Heart right ventricle (tissue), 16 donors: ENCODE measurements at regions of chr12 and their contacts with region 1.

Region 1: DNA sequence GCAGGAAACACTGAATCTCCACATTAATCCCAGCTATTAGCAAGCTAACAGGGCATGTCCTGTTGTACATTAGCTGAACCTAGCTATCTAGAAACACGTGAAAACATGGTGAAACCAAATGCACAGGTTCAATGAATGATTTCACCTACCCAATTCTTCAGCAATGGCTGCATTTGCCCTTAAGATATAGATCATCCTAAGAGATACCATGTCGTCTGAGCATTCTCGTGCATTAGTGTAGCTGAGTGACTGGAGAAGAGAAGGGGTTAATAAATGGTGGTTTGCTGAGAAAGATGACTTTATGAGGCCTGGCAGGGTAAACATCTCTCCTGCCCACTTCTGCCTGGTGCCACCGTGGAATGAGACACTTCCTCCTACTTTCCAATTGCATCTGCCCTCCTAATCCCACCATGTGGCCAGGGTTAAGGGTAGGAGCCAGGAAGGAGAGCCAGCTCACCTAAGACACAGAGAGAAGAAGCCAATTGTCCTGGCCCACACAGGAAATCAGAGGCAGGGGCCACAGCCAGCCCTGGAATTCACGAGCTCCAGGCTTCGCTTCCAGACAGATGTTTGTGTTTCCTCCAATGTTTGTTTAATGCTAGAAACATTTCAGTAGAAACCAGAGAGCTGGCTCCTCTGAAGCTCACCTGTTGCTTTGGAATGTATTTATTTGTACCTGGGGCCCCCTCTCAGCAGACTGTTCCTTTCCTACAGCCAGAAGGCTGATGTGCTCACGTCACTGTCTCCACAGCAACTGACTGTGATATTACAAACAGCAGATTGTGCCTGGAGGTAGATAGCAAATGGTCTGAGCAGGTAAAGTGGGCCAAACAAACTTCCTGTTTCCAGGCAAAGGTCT is 126.0 kb upstream of the PARP11 start:
- DNase-seq: no peak
- ATAC-seq: no peak
- H3K4me3 ChIP-seq: no peak overlapping the region
- H3K27ac ChIP-seq: no peak overlapping the region
- H3K4me1 ChIP-seq: no peaks in the 10 kb centered on the region
- H3K27me3 ChIP-seq: peaks cover 0 to 20% (median 0%) of the 10 kb centered on the region in 7 donors
- CTCF ChIP-seq: no peak

Region 2: GRCh38 chr12:3863756-3864329 is 135.4 kb before region 1 on chr12:
- intact Hi-C with region 1: no loop called
- DNase-seq: no peak
- ATAC-seq: no peak
- H3K4me3 ChIP-seq: no peak overlapping the region
- H3K27ac ChIP-seq: no peak overlapping the region
- H3K4me1 ChIP-seq: no peaks in the 10 kb centered on the region
- H3K27me3 ChIP-seq: no peaks in the 10 kb centered on the region
- CTCF ChIP-seq: no peak

Region 3: GRCh38 chr12:4030929-4031702 is 31.9 kb after region 1 on chr12:
- intact Hi-C with region 1: loop called in 8 of 10 experiments (anchors 2 to 5 kb)
- DNase-seq: peak; percentile 84
- ATAC-seq: peak; percentile 96 to 99 (median 98)
- H3K4me3 ChIP-seq: peak overlapping the region in 9 of 10 donors; percentile 38 to 71 (median 59)
- H3K27ac ChIP-seq: peak overlapping the region in 8 of 10 donors; percentile 22 to 82 (median 78)
- H3K4me1 ChIP-seq: peaks cover 0 to 24% (median 12%) of the 10 kb centered on the region in 9 donors
- H3K27me3 ChIP-seq: peaks cover 0 to 11% (median 0%) of the 10 kb centered on the region in 7 donors
- CTCF ChIP-seq: peak in 3 of 9 donors; percentile 8 to 34 (median 14)

Region 4: DNA sequence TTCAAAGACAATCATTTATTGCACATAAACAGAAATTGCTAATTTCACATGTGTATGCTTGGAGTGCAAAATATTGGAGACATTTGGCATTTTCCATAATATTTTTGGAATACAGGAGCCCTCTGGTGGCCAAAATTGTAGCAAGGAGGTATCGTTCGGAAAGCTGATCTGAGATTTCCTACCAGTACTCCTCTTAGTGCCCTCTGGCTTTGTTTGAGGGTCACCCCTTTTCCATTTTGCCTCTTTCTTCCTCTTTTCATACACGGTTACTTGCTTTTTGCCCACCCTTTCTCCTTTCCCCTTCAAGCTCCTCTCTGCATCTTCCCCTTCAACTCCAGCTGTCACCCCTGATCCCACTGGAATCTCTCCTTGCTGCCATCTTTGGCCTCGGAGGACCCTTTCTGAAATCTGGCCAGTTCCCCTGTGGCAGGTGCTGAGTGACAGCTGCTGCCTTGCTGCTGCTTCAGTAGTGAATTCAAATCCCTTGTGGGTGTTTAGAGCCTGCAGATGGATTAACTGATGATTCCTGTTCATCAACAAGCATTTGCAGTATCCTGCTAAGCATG is 38.6 kb after region 1 on chr12:
- intact Hi-C with region 1: loop called in 8 of 10 experiments (anchors 2 to 5 kb)
- DNase-seq: peak in 1 of 2 donors; percentile 56
- ATAC-seq: peak in 1 of 8 donors; percentile 52
- H3K4me3 ChIP-seq: no peak overlapping the region
- H3K27ac ChIP-seq: no peak overlapping the region
- H3K4me1 ChIP-seq: peaks cover 0 to 4% (median 0%) of the 10 kb centered on the region in 9 donors
- H3K27me3 ChIP-seq: peaks cover 0 to 6% (median 0%) of the 10 kb centered on the region in 7 donors
- CTCF ChIP-seq: peak; percentile 44 to 83 (median 71)

Region 5: GRCh38 chr12:4089121-4089606 is 90.0 kb after region 1 on chr12:
- intact Hi-C with region 1: no loop called
- DNase-seq: peak in 1 of 2 donors; percentile 36
- ATAC-seq: peak in 6 of 8 donors; percentile 27 to 84 (median 50)
- H3K4me3 ChIP-seq: no peak overlapping the region
- H3K27ac ChIP-seq: peak overlapping the region in 2 of 10 donors; percentile 47
- H3K4me1 ChIP-seq: peaks cover 0 to 9% (median 0%) of the 10 kb centered on the region in 9 donors
- H3K27me3 ChIP-seq: peaks cover 0 to 17% (median 8%) of the 10 kb centered on the region in 7 donors
- CTCF ChIP-seq: no peak

Region 6: DNA sequence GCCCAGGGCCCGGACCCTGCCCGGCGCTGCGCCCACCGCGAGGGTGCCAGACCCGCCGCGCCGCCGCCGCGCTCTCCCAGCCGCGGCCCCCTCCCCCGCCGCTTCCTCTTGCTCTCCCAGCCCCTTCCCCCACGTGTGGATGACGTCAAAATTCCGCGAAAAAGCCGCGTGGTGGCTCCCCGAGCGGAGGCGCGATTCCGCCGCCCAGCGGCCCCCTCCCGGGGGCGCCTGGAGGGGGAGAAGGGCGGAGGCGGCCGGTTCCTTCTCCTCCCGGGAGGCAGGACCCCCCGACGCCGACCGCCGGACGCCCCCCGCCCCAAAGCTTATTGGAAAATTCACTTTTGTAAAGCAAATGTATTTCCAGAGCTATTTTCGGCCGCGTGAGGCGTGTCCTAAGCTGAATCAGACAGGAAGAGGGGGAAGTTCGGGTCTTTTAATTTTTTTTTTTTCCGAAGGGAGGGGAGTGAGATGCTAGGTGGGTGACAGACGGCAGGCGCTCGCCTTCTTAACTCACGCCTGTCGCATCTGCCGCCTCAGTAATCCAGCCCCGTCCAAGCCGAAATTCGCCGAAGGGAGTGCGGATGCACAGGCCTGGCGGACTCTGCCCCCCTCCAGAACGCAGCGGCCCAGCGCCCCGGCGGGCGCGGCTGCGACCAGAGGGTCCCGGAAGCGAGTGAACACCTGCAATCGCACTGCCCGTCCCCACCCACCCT is 270.2 kb after region 1 on chr12:
- intact Hi-C with region 1: loop called in 3 of 10 experiments (anchors 2 to 10 kb)
- DNase-seq: peak; percentile 85 to 94
- ATAC-seq: peak; percentile 8 to 57 (median 46)
- H3K4me3 ChIP-seq: peak overlapping the region; percentile 44 to 95 (median 86)
- H3K27ac ChIP-seq: peak overlapping the region; percentile 47 to 98 (median 93)
- H3K4me1 ChIP-seq: peaks cover 5 to 50% (median 41%) of the 10 kb centered on the region in 9 donors
- H3K27me3 ChIP-seq: peaks cover 0 to 72% (median 5%) of the 10 kb centered on the region in 7 donors
- CTCF ChIP-seq: peak in 7 of 9 donors; percentile 20 to 49 (median 34)

Region 7: DNA sequence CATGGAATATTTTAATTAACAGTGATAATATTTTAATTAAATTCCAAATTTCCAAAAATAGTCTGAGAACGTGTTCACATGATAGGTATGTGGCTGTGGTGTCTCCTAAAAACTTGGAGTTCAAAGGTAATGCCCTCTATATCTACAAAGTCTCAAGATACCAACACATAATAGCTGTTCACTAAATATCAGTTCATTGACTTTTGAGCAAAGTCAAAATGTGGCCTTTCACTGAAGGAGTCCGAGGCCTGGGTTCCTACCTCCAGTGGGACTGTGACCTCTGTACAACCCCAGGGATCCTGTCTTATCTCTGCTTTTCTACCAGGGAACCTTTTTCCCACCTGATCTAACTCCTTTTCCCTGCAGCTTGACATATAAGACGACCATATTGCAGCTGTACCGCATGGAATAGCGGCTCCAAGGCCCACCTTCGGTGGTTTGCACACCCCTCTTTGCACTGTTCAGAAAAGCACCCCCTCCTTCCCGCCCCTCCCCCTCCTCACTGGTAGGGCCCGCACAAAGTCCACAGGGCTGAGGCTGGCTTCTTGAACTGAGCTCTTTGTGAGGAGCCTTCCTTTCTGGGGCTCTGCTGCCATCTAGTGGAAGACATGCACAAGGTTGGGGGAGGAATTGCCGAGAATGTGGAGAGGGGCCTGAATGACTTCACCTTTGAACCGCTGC is 277.5 kb after region 1 on chr12:
- intact Hi-C with region 1: loop called in 8 of 10 experiments (anchors 2 to 10 kb)
- DNase-seq: peak; percentile 72 to 93
- ATAC-seq: peak; percentile 19 to 56 (median 44)
- H3K4me3 ChIP-seq: peak overlapping the region in 7 of 10 donors; percentile 63 to 95 (median 92)
- H3K27ac ChIP-seq: peak overlapping the region in 9 of 10 donors; percentile 81 to 98 (median 96)
- H3K4me1 ChIP-seq: peaks cover 17 to 84% (median 73%) of the 10 kb centered on the region in 9 donors
- H3K27me3 ChIP-seq: peaks cover 0 to 45% (median 0%) of the 10 kb centered on the region in 7 donors
- CTCF ChIP-seq: peak; percentile 73 to 92 (median 90)

Region 8: DNA sequence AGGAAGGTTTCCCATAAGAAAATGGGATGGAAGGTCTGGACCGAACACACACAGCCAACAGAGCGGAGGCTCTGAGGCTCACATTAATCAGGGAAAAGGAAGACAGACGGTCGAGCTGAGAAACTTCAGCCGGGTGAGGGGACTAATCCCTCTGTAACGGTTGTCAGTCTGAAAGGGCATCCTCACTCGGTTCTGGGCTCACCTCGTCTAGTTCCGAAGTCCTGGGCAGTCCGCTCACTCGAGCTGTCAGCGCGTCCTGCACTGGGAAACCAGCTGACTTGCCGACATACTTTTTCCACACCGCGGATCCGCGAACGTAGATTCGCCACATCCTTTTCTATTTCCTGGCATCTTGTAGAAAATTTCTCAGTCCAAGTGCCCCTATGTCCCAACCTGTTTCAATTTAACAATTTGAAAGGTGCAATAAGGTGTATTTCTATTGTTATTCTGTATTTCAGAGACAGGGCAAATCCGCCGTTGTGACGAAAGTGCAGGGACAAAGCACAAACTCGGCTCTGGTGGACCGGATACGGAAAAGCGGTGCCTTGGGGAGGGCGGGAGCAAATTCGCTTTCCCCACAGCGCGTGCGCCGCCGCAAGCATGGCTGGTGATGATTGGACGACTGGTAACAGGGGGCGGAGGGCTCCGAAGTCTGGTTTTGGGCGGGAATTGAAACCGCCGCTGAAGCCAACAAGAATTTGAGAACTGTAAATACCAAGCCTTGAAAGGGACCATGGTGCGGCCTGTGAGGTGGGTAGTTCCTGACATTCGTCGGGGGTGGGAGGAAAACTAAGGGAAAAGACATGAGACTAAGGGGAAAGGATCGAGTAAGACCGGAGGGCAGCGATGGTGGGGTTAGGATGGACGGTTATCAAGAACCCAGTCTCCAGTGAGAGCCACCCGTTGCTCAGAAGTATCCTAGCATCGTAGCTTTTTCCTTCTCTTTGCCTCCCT is 539.3 kb after region 1 on chr12 and contains the start of gene RAD51AP1:
- intact Hi-C with region 1: loop called in 1 of 10 experiments (anchors 10 kb)
- DNase-seq: peak; percentile 94 to 95
- ATAC-seq: peak; percentile 100
- H3K4me3 ChIP-seq: peak within 1 kb of the TSS; percentile 61 to 92 (median 72)
- H3K27ac ChIP-seq: peak within 1 kb of the TSS; percentile 90 to 99 (median 93)
- H3K4me1 ChIP-seq: peaks cover 3 to 32% (median 18%) of the 10 kb centered on the region in 9 donors
- H3K27me3 ChIP-seq: no peaks in the 10 kb centered on the region
- CTCF ChIP-seq: no peak
- total RNA-seq, gene RAD51AP1: 0.35 to 3.4 (median 1.2) TPM